ENCODE measurements at regions of chr7 and their contacts with region 1.

Region 1: DNA sequence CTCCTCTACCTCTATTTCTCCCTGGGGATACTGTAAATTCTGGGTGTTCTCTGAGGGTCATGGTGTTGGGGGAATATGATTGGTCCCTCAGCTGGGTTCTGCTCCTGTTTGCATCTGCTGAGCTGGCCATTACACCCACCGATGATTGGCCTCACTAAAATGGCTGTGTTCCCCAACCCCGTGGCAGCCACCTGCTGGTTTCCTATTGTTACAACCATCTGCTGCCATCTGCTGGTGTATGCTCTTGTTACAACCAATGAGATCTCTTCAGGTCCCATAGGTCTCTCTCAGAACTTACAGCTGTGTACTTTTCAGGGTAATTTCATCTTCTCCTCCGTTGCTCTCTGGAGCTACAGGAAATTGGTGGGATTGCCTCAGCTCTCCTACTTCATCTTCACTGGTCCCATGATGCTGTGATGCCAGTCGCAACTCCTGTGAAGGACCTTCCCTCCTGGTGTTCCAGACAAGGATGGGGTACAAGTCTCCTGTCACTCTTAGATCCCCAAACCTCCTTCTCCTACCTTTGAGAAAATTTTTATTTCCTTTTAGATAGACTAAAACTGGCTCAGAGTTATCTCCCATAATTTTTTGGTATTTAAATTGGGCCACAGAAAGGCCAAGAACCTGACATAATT is 303.5 kb upstream of the SMIM30 start:
- DNase-seq: peak; percentile 82
- ATAC-seq: peak; percentile 97
- H3K4me3 ChIP-seq: no peak overlapping the region
- H3K27ac ChIP-seq: no peak overlapping the region
- H3K4me1 ChIP-seq: no peaks in the 10 kb centered on the region
- H3K27me3 ChIP-seq: no peaks in the 10 kb centered on the region
- CTCF ChIP-seq: peak; percentile 97
- POLR2A ChIP-seq: no peak; the same call in 1 of the 2 replicates
- RAD21 ChIP-seq: peak; percentile 93

Region 2: GRCh38 chr7:112701451-112701850 is 720.4 kb before region 1 on chr7:
- CTCF ChIA-PET with region 1: no interaction called
- POLR2A ChIA-PET with region 1: no interaction called
- dilution Hi-C with region 1: no loop called
- in situ Hi-C with region 1: no loop called
- intact Hi-C with region 1: no loop called
- DNase-seq: no peak
- ATAC-seq: no peak
- H3K4me3 ChIP-seq: no peak overlapping the region
- H3K27ac ChIP-seq: no peak overlapping the region
- H3K4me1 ChIP-seq: no peaks in the 10 kb centered on the region
- H3K27me3 ChIP-seq: no peaks in the 10 kb centered on the region; the same call in 1 of the 2 replicates
- CTCF ChIP-seq: no peak
- POLR2A ChIP-seq: no peak
- RAD21 ChIP-seq: no peak

Region 3: DNA sequence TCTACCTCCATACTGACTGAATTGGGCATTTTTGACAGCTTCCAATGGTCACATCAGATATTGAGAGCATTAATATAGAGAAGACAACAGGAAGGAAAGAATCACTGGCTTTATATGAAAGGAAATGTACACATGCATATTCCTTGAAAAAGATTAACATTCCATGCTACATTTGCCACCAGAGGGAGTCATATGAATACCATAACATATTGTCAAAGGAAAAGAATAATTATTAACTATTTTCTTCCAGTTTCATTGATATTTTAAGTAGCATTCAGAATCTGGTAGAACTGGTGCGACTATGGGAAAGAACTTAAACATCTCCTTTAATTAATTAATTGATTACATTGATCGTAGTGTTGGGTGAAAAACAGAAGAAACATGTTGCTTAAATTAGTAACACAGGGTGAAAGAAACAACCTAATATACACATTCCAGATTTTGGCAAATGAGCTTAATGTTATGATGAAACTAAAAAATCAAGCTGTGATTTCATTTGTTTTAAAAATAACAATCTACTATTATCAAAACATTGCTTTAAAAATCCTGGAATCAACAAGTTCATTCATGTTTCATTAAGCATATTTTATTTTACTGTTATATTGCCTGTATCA is 406.7 kb before region 1 on chr7:
- CTCF ChIA-PET with region 1: interaction called, 5 read pairs
- POLR2A ChIA-PET with region 1: no interaction called
- dilution Hi-C with region 1: no loop called
- in situ Hi-C with region 1: loop called (anchors 10 kb)
- intact Hi-C with region 1: loop called (anchors 1 kb)
- DNase-seq: peak; percentile 60
- ATAC-seq: peak; percentile 53
- H3K4me3 ChIP-seq: no peak overlapping the region
- H3K27ac ChIP-seq: no peak overlapping the region
- H3K4me1 ChIP-seq: peaks cover 2% of the 10 kb centered on the region; the same call in 1 of the 2 replicates
- H3K27me3 ChIP-seq: no peaks in the 10 kb centered on the region
- CTCF ChIP-seq: peak; percentile 65
- POLR2A ChIP-seq: no peak
- RAD21 ChIP-seq: peak; percentile 72

Region 4: DNA sequence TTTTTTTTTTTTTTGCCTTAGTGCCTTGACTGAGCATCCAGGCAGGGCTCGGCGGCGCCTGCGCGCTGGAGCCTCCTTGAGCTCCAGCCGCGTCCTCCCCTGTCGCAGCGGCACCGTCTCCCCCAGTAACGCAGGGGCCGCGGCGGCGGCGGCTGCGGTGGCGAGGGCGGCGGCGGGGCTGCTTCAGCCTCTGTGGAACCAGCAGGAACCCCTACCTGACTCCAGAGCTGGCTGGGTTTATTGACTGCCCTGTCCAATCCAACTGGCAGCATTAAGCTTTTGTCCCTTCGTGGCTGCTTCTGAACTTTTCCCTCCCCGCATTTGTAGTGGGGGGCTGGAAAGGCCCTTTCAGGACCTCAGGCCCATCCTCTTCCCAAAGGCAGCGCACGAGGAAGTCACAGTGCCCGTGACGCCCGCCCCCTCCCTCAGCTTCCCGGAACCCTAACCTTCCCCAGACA is 335.4 kb before region 1 on chr7 and contains the start of gene GPR85:
- CTCF ChIA-PET with region 1: no interaction called
- POLR2A ChIA-PET with region 1: no interaction called
- dilution Hi-C with region 1: no loop called
- in situ Hi-C with region 1: no loop called
- intact Hi-C with region 1: loop called (anchors 10 kb)
- DNase-seq: peak; percentile 73
- ATAC-seq: peak; percentile 90
- H3K4me3 ChIP-seq: peak within 1 kb of the TSS; percentile 97
- H3K27ac ChIP-seq: peak within 1 kb of the TSS; percentile 84
- H3K4me1 ChIP-seq: 0 out of 2 replicates have a peak, but pooled peaks cover 3% of the 10 kb centered on the region
- H3K27me3 ChIP-seq: no peaks in the 10 kb centered on the region
- CTCF ChIP-seq: no peak
- POLR2A ChIP-seq: no peak
- RAD21 ChIP-seq: no peak
- total RNA-seq, gene GPR85: 5.0 and 5.4 TPM in 2 replicates

Region 5: GRCh38 chr7:113289140-113289740 is 132.6 kb before region 1 on chr7:
- CTCF ChIA-PET with region 1: no interaction called
- POLR2A ChIA-PET with region 1: no interaction called
- dilution Hi-C with region 1: no loop called
- in situ Hi-C with region 1: no loop called
- intact Hi-C with region 1: loop called (anchors 2 kb)
- DNase-seq: peak; percentile 71
- ATAC-seq: peak; percentile 95
- H3K4me3 ChIP-seq: no peak overlapping the region
- H3K27ac ChIP-seq: no peak overlapping the region
- H3K4me1 ChIP-seq: no peaks in the 10 kb centered on the region
- H3K27me3 ChIP-seq: no peaks in the 10 kb centered on the region
- CTCF ChIP-seq: peak; percentile 67
- POLR2A ChIP-seq: no peak
- RAD21 ChIP-seq: peak; percentile 78

Measured in IMR-90 (cell line).